HepG2 (cell line): ENCODE measurements at regions of chr6 and their contacts with region 1.

Region 1: DNA sequence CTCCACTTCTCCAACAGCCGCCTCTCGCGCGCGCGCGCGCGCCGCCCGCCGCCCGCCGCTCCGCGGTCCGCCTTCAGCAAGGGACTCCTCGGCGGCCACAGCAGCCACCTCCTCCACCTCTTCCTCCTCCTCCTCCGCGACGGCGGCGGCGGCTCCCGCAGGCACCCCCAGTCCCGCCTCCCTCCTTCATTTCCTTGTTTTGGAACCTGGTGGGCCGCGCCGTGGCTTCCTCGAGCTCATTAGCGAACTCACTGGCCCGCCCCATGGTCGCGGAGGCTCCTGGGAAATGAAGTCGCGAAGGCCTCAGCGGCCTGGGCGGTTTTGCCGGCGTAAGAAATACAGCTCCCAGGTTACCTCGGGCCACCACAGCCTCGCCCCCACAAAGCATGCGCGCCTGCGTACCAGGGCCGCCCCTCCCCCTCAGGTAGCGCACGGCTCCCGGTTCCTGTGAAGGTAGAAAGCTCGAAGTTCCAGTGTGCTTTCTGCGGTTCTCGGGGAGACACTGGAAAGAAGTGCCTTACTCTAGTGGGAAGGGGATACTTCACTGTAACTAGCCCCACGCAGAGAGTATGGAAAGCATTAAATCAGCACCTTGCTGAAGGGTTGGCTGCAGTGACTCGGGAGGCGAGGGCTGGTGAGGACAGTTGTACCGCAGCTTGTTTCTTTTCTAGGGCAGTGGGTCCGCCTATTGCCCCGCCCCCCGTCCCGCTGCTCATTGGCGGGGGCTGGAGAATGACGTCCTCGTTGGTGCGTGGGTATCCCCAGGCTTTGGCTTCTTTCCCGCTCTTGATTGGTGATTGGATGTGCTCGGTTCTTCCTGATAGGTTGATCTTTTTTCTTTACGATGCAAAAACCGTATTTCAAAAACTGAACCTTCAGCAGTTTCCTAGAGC is at the start of gene CDK19:
- DNase-seq: peak; percentile 98
- ATAC-seq: peak; percentile 91
- H3K4me3 ChIP-seq: peak within 1 kb of the TSS; percentile 92 to 94 (median 92)
- H3K27ac ChIP-seq: peak within 1 kb of the TSS; percentile 100
- H3K4me1 ChIP-seq: peaks cover 38% of the 10 kb centered on the region
- H3K27me3 ChIP-seq: no peaks in the 10 kb centered on the region; a peak in 1 of 5 replicates
- CTCF ChIP-seq: no peak
- EP300 ChIP-seq: no peak
- POLR2A ChIP-seq: peak; percentile 94 to 98
- RAD21 ChIP-seq: no peak
- total RNA-seq, gene CDK19: 13.4 and 20.8 TPM in 2 replicates

Region 2: GRCh38 chr6:109891924-109892323 is 923.5 kb before region 1 on chr6:
- CTCF ChIA-PET with region 1: no interaction called
- POLR2A ChIA-PET with region 1: no interaction called
- in situ Hi-C with region 1: no loop called
- intact Hi-C with region 1: no loop called
- DNase-seq: no peak
- ATAC-seq: no peak
- H3K4me3 ChIP-seq: no peak overlapping the region
- H3K27ac ChIP-seq: no peak overlapping the region
- H3K4me1 ChIP-seq: no peaks in the 10 kb centered on the region
- H3K27me3 ChIP-seq: peaks cover 1 to 43% of the 10 kb centered on the region in 2 experiments
- CTCF ChIP-seq: no peak
- EP300 ChIP-seq: no peak
- POLR2A ChIP-seq: no peak
- RAD21 ChIP-seq: no peak

Region 3: GRCh38 chr6:110682460-110682853 is 133.0 kb before region 1 on chr6:
- CTCF ChIA-PET with region 1: no interaction called
- POLR2A ChIA-PET with region 1: interaction called, 15 read pairs
- in situ Hi-C with region 1: loop called (anchors 10 kb)
- intact Hi-C with region 1: loop called (anchors 1 kb)
- DNase-seq: peak; percentile 85
- ATAC-seq: peak; percentile 98
- H3K4me3 ChIP-seq: peak overlapping the region in 1 of 3 experiments; percentile 6; a peak in 1 of 6 replicates
- H3K27ac ChIP-seq: peak overlapping the region; percentile 49
- H3K4me1 ChIP-seq: peaks cover 31% of the 10 kb centered on the region
- H3K27me3 ChIP-seq: no peaks in the 10 kb centered on the region
- CTCF ChIP-seq: peak; percentile 87
- EP300 ChIP-seq: no peak
- POLR2A ChIP-seq: no peak
- RAD21 ChIP-seq: peak; percentile 63; the same call in 1 of the 2 replicates

Region 4: GRCh38 chr6:110746680-110747079 is 68.8 kb before region 1 on chr6:
- CTCF ChIA-PET with region 1: no interaction called
- POLR2A ChIA-PET with region 1: interaction called, 33 read pairs
- in situ Hi-C with region 1: no loop called
- intact Hi-C with region 1: loop called (anchors 2 kb)
- DNase-seq: peak; percentile 93
- ATAC-seq: peak; percentile 99
- H3K4me3 ChIP-seq: peak overlapping the region; percentile 47 to 63 (median 48); a peak in 5 of 6 replicates
- H3K27ac ChIP-seq: peak overlapping the region; percentile 81
- H3K4me1 ChIP-seq: peaks cover 57% of the 10 kb centered on the region
- H3K27me3 ChIP-seq: no peaks in the 10 kb centered on the region
- CTCF ChIP-seq: no peak
- EP300 ChIP-seq: peak in 1 of 2 experiments; percentile 79; a peak in 2 of 4 replicates
- POLR2A ChIP-seq: no peak; a peak in 2 of 4 replicates
- RAD21 ChIP-seq: no peak

Region 5: GRCh38 chr6:110799189-110799588 is 16.3 kb before region 1 on chr6:
- CTCF ChIA-PET with region 1: no interaction called
- POLR2A ChIA-PET with region 1: interaction called, 13 read pairs
- in situ Hi-C with region 1: no loop called
- intact Hi-C with region 1: no loop called
- DNase-seq: no peak
- ATAC-seq: no peak
- H3K4me3 ChIP-seq: no peak overlapping the region
- H3K27ac ChIP-seq: no peak overlapping the region
- H3K4me1 ChIP-seq: peaks cover 21% of the 10 kb centered on the region
- H3K27me3 ChIP-seq: no peaks in the 10 kb centered on the region
- CTCF ChIP-seq: no peak
- EP300 ChIP-seq: no peak
- POLR2A ChIP-seq: no peak
- RAD21 ChIP-seq: no peak

Region 6: DNA sequence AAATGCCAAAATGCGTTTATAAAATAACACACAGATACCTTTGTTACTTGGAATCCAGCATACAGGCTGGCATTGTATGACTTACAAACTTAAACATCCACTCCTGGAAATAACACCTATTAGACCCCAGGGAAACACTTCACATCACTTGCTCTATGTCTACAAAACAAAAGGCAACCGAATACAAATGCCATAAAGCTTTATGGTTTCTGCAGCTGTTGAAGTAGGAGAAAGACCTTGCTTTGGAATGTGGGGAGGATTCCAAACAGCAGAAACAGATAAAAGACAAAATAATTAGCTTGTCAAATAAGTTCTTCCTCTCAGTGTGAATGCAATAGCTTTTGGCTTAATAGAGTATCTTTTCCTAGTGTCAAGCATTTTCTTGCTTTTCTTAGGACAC is 49.4 kb after region 1 on chr6:
- CTCF ChIA-PET with region 1: no interaction called
- POLR2A ChIA-PET with region 1: interaction called, 12 read pairs
- in situ Hi-C with region 1: no loop called
- intact Hi-C with region 1: no loop called
- DNase-seq: peak; percentile 40
- ATAC-seq: peak; percentile 42; the same call in 2 of the 3 replicates
- H3K4me3 ChIP-seq: no peak overlapping the region; a peak in 1 of 6 replicates
- H3K27ac ChIP-seq: peak overlapping the region; percentile 31
- H3K4me1 ChIP-seq: peaks cover 50% of the 10 kb centered on the region
- H3K27me3 ChIP-seq: no peaks in the 10 kb centered on the region
- CTCF ChIP-seq: no peak
- EP300 ChIP-seq: no peak
- POLR2A ChIP-seq: no peak
- RAD21 ChIP-seq: no peak

Region 7: GRCh38 chr6:110958329-110959192 is 143.1 kb after region 1 on chr6 and contains the start of gene GTF3C6:
- CTCF ChIA-PET with region 1: no interaction called
- POLR2A ChIA-PET with region 1: interaction called, 20 read pairs
- in situ Hi-C with region 1: no loop called
- intact Hi-C with region 1: no loop called
- DNase-seq: peak; percentile 82
- ATAC-seq: peak; percentile 99
- H3K4me3 ChIP-seq: peak within 1 kb of the TSS; percentile 80 to 93 (median 91)
- H3K27ac ChIP-seq: peak within 1 kb of the TSS; percentile 92
- H3K4me1 ChIP-seq: peaks cover 36% of the 10 kb centered on the region
- H3K27me3 ChIP-seq: no peaks in the 10 kb centered on the region
- CTCF ChIP-seq: 0 out of 2 replicates have a peak, but pooled peaks have one; percentile 5
- EP300 ChIP-seq: 0 out of 4 replicates have a peak, but pooled peaks of 1 of the 2 experiments have one; percentile 20
- POLR2A ChIP-seq: peak; percentile 89 to 90
- RAD21 ChIP-seq: peak; percentile 45; the same call in 1 of the 2 replicates
- total RNA-seq, gene GTF3C6: 160 and 195 TPM in 2 replicates

Region 8: DNA sequence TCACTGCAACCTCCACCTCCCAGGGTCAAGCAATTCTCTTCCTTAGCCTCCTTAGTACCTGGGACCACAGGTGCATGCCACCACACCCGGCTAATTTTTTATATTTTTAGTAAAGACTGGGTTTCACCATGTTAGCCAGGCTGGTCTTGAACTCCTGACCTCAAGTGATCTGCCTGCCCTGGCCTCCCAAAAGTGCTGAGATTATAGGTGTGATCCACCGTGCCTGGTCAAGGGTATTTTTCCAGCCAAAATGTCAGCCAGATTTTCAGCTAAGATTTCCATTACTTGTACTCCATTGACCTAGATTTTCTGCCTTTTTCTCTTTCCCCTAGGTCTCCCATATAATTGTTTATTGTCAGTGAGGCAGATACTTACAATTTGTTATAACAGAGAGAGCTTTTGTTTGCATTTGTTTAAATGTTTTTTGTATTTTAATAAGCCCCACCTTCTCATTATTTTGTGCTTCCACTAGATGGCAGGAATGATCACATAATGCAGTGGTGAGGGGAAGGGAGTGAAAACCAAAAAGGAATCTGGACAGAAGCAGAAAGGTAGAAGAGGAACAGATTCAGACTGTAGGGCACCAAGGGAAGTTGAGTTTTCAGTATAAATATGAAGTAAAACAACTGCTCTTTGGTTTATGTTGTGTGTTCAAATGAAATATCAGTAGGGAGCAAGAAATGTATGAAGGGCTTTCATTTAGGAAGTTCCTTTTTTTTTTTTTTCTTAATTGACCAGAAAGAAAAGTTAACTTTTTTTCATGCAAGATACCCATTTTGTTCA is 196.1 kb after region 1 on chr6:
- CTCF ChIA-PET with region 1: no interaction called
- POLR2A ChIA-PET with region 1: no interaction called
- in situ Hi-C with region 1: no loop called
- intact Hi-C with region 1: no loop called
- DNase-seq: peak; percentile 32
- ATAC-seq: peak; percentile 82
- H3K4me3 ChIP-seq: no peak overlapping the region
- H3K27ac ChIP-seq: no peak overlapping the region
- H3K4me1 ChIP-seq: no peaks in the 10 kb centered on the region
- H3K27me3 ChIP-seq: no peaks in the 10 kb centered on the region
- CTCF ChIP-seq: peak; percentile 69
- EP300 ChIP-seq: no peak
- POLR2A ChIP-seq: no peak
- RAD21 ChIP-seq: peak; percentile 41; the same call in 1 of the 2 replicates